ENCODE measurements at regions of chr7 and their contacts with region 1.

Region 1: GRCh38 chr7:135662373-135663114 is at the start of gene STMP1:
- DNase-seq: peak; percentile 69
- H3K4me3 ChIP-seq: peak within 1 kb of the TSS; percentile 100
- H3K27me3 ChIP-seq: no peaks in the 10 kb centered on the region
- CTCF ChIP-seq: peak; percentile 77; the same call in 1 of the 2 replicates
- polyA plus RNA-seq, gene STMP1: 17.0 and 37.2 TPM in 2 replicates

Region 2: DNA sequence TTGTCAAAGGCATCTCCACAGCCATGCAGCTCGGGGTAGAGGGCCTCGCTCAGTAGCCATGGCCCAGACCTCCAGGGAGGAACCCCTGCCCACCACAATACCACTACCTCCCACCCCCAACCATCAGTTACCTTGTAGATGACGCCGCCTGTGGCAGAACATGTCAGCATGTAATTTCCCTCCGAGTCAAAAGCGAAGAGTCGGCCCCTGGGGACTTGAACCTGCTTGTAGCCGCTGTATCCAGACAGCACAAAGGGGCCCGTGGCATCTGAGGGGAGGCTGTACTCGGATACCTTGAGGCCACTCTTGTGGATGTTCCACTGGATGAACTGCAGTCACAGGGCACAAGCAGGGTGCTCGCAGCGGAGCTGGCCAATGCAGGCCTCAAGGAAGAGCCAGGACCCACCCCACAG is 475.7 kb before region 1 on chr7:
- CTCF ChIA-PET with region 1: no interaction called
- POLR2A ChIA-PET with region 1: no interaction called
- DNase-seq: no peak
- H3K4me3 ChIP-seq: no peak overlapping the region
- H3K27me3 ChIP-seq: no peaks in the 10 kb centered on the region
- CTCF ChIP-seq: no peak

Region 3: DNA sequence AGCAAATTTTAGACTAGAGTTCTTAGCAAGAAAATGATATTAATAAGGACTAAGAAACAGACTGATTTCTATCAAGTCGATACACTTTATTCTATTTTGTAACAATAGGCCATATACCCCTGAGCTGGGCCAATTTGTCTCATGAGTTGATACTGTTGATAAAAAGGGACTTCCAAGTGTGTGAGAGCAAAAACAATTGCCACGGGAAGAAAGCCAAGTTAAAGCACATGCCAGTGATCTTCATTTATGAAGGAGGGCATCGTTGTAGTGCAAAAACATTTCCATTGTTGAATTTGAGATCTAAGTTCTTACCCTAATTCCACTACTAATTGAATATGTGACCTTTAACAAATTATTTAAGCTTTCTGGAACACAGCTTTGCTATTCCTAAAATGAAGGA is 272.6 kb before region 1 on chr7:
- CTCF ChIA-PET with region 1: no interaction called
- POLR2A ChIA-PET with region 1: no interaction called
- DNase-seq: no peak
- H3K4me3 ChIP-seq: no peak overlapping the region
- H3K27me3 ChIP-seq: no peaks in the 10 kb centered on the region
- CTCF ChIP-seq: no peak

Region 4: DNA sequence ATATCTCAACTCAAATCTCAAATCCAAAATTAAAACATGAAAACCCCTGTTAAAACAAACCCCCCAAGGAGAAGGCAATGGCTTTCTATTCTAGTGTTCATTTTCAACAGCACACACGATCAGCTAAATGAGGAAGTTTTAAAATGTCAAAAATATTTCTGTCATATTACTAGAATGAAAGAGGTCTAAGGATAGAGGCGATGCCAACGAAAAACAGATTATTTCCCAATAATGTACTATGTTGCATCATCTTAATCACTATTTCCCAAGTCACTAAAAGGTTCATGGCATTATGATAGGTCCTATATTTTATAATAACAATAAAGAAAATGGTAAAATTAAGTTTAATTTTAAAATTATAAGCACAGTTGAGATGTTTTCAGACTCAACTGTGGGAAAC is 162.7 kb before region 1 on chr7:
- CTCF ChIA-PET with region 1: no interaction called
- POLR2A ChIA-PET with region 1: no interaction called
- DNase-seq: no peak
- H3K4me3 ChIP-seq: no peak overlapping the region
- H3K27me3 ChIP-seq: no peaks in the 10 kb centered on the region
- CTCF ChIP-seq: no peak

Region 5: GRCh38 chr7:135509903-135510602 is 152.5 kb before region 1 on chr7 and contains the start of gene CNOT4:
- CTCF ChIA-PET with region 1: no interaction called
- POLR2A ChIA-PET with region 1: no interaction called
- DNase-seq: peak; percentile 81
- H3K4me3 ChIP-seq: peak within 1 kb of the TSS; percentile 77
- H3K27me3 ChIP-seq: no peaks in the 10 kb centered on the region
- CTCF ChIP-seq: no peak
- polyA plus RNA-seq, gene CNOT4: 11.0 and 13.8 TPM in 2 replicates

Region 6: DNA sequence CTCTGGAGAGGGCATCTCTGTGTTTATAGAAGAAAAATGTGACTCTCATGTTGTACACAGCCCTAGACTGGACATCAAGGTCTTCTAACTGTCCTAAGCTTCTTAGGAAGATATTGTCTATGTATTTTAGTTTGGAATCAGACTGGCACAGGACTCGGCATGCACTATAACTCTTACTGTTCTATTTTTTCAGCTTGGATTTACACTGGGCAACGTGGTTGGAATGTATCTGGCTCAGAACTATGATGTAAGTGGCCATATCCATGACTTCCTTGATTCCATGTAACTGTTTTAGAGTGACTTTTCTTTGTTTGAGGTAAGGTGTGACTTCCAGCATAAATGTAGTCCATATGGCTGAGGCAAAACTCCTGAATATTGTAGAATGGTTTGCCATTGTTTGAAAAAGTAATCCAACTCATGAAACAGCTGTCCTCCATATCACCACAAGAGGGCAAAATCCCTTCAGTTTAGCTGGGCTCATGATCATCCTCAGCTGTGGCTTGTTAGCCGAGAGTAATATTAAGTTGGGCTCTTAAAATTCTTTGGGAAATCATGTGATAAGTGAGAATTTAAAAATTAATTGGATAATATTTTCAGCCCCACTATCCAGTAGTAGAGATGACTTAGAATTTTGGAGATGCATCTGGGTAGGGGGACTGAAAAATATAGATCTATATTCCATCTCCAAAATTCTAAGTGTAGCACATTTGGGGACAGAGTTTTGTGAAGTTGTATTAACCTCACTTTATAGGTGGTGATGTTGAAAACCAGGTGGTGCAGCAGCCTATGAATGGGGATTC is 10.2 kb after region 1 on chr7:
- CTCF ChIA-PET with region 1: interaction called, 39 read pairs
- POLR2A ChIA-PET with region 1: interaction called, 12 read pairs
- DNase-seq: no peak
- H3K4me3 ChIP-seq: no peak overlapping the region
- H3K27me3 ChIP-seq: no peaks in the 10 kb centered on the region
- CTCF ChIP-seq: peak; percentile 84

Region 7: GRCh38 chr7:135690566-135690965 is 28.0 kb after region 1 on chr7:
- CTCF ChIA-PET with region 1: no interaction called
- POLR2A ChIA-PET with region 1: interaction called, 14 read pairs
- DNase-seq: no peak
- H3K4me3 ChIP-seq: no peak overlapping the region
- H3K27me3 ChIP-seq: no peaks in the 10 kb centered on the region
- CTCF ChIP-seq: no peak

Region 8: DNA sequence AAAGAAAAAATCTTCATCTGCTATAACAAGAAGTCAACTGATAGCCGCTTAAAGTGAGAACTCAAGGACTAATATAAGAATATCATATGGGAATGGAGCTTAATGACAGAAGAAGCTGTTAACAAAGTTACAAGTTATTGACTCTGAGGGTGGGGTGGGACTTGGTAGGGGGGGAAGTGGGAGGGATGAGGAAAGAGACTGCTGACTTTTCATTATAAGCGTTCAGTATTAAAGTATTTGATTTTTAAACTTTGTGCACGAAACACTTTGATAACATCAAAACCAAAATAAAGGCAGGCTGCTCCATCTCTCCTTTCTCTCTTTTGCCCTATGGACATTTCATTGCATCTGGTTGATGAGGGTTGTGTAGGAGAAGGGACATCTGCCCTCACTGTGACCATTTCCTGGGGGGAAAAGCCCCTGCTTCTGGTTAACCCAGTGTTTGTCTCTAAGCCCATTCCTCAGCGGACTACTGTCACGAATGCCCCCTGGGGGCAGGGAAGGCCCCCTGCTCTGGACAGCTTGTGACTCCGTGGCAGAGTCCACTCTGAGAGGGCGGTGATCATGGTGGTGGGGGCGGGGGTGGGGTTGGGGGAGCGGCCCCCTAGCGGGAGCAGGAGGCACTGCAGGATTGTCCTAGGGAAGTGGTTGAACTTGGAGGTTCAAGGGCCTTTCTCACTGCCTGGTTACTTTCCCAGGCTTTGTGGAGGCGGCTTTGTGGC is 48.0 kb after region 1 on chr7:
- CTCF ChIA-PET with region 1: interaction called, 10 read pairs
- POLR2A ChIA-PET with region 1: no interaction called
- DNase-seq: no peak
- H3K4me3 ChIP-seq: no peak overlapping the region
- H3K27me3 ChIP-seq: no peaks in the 10 kb centered on the region
- CTCF ChIP-seq: peak; percentile 65

Region 9: GRCh38 chr7:136009488-136010079 is 347.0 kb after region 1 on chr7:
- CTCF ChIA-PET with region 1: interaction called, 13 read pairs
- POLR2A ChIA-PET with region 1: no interaction called
- DNase-seq: no peak
- H3K4me3 ChIP-seq: no peak overlapping the region
- H3K27me3 ChIP-seq: no peaks in the 10 kb centered on the region
- CTCF ChIP-seq: peak; percentile 56